ENCODE measurements at regions of chr2 and their contacts with region 1.

Region 1: DNA sequence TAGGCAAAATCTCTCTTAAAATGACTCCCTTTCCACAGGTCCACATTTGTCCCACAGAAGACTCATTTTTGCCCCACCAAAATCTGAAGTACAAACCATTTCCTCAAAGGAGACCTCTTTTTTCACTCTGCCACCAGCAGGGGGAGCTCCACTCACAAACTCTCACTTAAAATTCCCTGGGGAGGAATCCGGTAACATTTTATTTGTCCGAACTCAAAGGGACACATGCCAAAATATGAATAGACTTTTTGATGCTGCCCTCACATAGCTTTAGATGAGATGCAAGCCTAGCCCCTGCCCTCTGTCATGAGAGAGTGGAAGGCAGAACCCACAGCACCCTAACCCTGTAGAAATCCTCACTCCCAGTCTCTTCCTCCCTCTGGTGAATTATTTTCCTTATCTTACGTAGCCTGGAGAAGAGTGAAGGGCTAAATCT is 57.1 kb downstream of the RMDN2 start:
- DNase-seq: peak; percentile 16
- H3K4me3 Mint-ChIP-seq: no peak overlapping the region
- H3K27ac Mint-ChIP-seq: no peak overlapping the region
- H3K4me1 Mint-ChIP-seq: peaks cover 14% of the 10 kb centered on the region
- H3K27me3 Mint-ChIP-seq: peaks cover 9% of the 10 kb centered on the region

Region 2: DNA sequence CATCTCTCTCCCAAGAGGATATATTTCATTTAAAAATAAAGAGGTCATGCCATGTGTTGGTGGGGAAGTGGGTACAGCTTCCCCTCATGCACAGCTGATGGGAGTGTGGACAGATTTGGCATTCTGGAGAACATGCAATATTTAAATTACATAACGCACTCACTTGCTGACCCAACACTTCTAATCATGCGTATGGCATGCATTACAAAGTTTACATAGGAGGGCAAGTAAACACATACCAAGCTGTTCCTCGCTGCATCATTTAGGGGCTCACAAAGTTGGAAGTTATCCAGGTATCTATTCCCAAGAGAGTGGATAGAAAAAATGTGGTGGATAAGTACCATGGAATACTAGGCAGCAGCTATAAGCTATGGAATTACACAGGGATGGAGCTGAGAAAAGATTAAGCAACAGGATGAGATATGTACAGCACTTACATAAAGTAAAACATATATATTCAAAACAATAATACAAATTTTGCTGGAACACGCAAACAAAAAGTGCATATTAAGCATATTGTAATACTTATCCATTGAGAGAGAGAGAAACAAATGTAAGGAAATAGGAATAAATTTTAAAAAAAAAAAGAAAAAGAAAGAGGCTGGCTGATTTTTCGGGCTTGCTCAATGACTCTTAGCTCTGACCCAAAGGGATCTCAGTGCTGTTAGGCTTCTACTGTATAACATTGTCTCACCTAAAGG is 82.8 kb after region 1 on chr2:
- intact Hi-C with region 1: no loop called
- DNase-seq: no peak
- H3K4me3 Mint-ChIP-seq: no peak overlapping the region
- H3K27ac Mint-ChIP-seq: no peak overlapping the region
- H3K4me1 Mint-ChIP-seq: no peaks in the 10 kb centered on the region
- H3K27me3 Mint-ChIP-seq: no peaks in the 10 kb centered on the region

Region 3: DNA sequence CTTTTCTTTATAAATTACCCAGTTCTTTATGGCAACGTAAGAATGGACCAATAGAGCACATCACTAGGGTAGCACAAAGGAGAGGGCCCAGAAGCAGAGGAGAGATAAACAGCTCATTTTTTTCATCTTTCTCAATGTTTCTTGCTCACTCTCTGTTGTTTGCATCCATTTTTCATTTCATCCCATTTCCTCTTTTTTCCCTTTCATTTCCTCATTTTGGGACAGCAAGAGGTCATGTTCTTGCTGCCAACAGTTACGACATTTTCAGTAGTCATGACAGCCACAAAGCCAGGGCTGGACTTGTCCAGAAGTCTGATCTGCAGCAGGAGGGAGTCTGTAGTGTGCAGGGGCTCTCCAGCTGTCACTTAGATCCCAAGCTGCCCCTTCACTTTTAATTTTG is 146.5 kb after region 1 on chr2:
- intact Hi-C with region 1: no loop called
- DNase-seq: no peak
- H3K4me3 Mint-ChIP-seq: no peak overlapping the region
- H3K27ac Mint-ChIP-seq: no peak overlapping the region
- H3K4me1 Mint-ChIP-seq: peaks cover 4% of the 10 kb centered on the region
- H3K27me3 Mint-ChIP-seq: no peaks in the 10 kb centered on the region

Region 4: GRCh38 chr2:38508311-38509039 is 526.3 kb after region 1 on chr2:
- intact Hi-C with region 1: loop called (anchors 1 kb)
- DNase-seq: peak; percentile 67
- H3K4me3 Mint-ChIP-seq: no peak overlapping the region
- H3K27ac Mint-ChIP-seq: no peak overlapping the region
- H3K4me1 Mint-ChIP-seq: peaks cover 19% of the 10 kb centered on the region
- H3K27me3 Mint-ChIP-seq: peaks cover 2% of the 10 kb centered on the region